Testis (tissue), 5 donors: ENCODE measurements at regions of chr2 and their contacts with region 1.

Region 1: DNA sequence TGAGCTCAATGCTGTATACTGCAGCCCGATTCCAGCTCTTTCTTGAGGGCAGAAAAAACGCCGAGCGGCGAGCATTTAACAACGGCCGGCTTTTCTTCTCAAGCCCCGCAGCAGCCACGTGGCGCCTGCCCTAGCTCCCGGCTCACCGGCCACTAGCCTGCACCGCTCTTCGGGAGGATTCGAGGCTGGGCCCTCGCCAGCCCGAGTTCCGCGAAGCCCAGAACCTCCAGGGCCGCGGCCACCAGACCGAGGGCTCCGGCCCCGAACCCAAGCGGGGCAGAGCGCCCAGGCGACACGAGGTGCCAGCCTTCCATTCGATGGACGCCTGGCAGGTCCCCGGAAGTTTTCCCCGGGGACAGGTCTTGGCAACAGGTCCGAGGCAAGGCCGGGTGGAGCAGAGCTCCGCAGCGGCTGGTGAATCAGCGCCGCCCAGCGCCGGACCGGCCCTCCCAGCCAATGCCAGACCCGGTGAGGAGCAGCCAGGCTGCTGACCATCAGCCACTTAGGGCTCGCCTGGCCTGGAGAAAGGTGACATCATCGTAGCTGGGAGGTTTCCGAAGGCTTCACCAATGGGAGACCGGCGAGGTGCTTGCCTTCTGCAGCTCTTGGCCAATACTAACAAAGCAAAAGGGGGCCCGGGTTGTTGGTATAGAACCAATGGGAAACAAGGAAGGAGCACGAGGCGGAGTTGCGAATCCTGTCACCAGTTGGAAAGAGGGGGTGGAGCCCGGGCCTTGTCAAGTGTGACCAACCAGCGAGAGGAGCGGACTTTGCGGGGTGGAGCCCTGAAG is 544 bp upstream of the MXD1 start:
- DNase-seq: peak; percentile 100
- H3K4me3 ChIP-seq: peak overlapping the region; percentile 62 to 90
- H3K27ac ChIP-seq: peak overlapping the region; percentile 91 to 95
- H3K4me1 ChIP-seq: peaks cover 8% of the 10 kb centered on the region
- H3K27me3 ChIP-seq: no peaks in the 10 kb centered on the region
- CTCF ChIP-seq: peak in 1 of 3 experiments; percentile 22
- POLR2A ChIP-seq: peak; percentile 96

Region 2: GRCh38 chr2:69509007-69509749 is 405.2 kb before region 1 on chr2:
- intact Hi-C with region 1: no loop called
- DNase-seq: no peak
- H3K4me3 ChIP-seq: no peak overlapping the region
- H3K27ac ChIP-seq: no peak overlapping the region
- H3K4me1 ChIP-seq: no peaks in the 10 kb centered on the region
- H3K27me3 ChIP-seq: no peaks in the 10 kb centered on the region
- CTCF ChIP-seq: no peak
- POLR2A ChIP-seq: no peak

Region 3: GRCh38 chr2:69973335-69973735 is 59.0 kb after region 1 on chr2:
- intact Hi-C with region 1: no loop called
- DNase-seq: no peak
- H3K4me3 ChIP-seq: no peak overlapping the region
- H3K27ac ChIP-seq: no peak overlapping the region
- H3K4me1 ChIP-seq: no peaks in the 10 kb centered on the region
- H3K27me3 ChIP-seq: no peaks in the 10 kb centered on the region
- CTCF ChIP-seq: no peak
- POLR2A ChIP-seq: no peak

Region 4: GRCh38 chr2:70142590-70143313 is 228.4 kb after region 1 on chr2:
- intact Hi-C with region 1: loop called (anchors 5 kb)
- DNase-seq: peak; percentile 98
- H3K4me3 ChIP-seq: peak overlapping the region; percentile 60 to 89
- H3K27ac ChIP-seq: peak overlapping the region; percentile 100
- H3K4me1 ChIP-seq: peaks cover 17% of the 10 kb centered on the region
- H3K27me3 ChIP-seq: no peaks in the 10 kb centered on the region
- CTCF ChIP-seq: peak; percentile 92 to 100 (median 100)
- POLR2A ChIP-seq: peak; percentile 95